ENCODE measurements at regions of chr1 and their contacts with region 1.

Region 1: GRCh38 chr1:228500901-228501871 is 14.0 kb downstream of the RNF187 start:
- DNase-seq: peak; percentile 80
- H3K4me3 Mint-ChIP-seq: peak overlapping the region; percentile 40
- H3K27ac Mint-ChIP-seq: peak overlapping the region; percentile 29
- H3K4me1 Mint-ChIP-seq: peaks cover 36% of the 10 kb centered on the region
- H3K27me3 Mint-ChIP-seq: no peaks in the 10 kb centered on the region

Region 2: DNA sequence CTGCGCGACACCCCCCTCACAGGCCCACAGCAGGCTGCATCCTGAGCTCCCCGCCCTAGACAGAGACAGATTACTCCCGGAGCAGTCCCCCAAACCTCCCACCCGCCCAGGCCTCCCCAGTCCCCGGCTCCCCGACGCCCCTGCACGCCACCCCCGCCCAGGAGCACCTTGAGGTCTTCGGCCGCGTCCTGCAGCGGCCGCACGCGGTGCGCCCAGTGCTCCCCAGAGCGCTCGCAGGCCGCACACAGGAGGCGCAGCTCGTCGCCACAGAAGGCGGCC is 95.3 kb before region 1 on chr1:
- intact Hi-C with region 1: loop called (anchors 5 kb)
- DNase-seq: no peak
- H3K4me3 Mint-ChIP-seq: peak overlapping the region; percentile 97
- H3K27ac Mint-ChIP-seq: peak overlapping the region; percentile 92
- H3K4me1 Mint-ChIP-seq: peaks cover 41% of the 10 kb centered on the region
- H3K27me3 Mint-ChIP-seq: no peaks in the 10 kb centered on the region

Region 3: GRCh38 chr1:228464487-228464983 is 36.7 kb before region 1 on chr1:
- intact Hi-C with region 1: loop called (anchors 1 kb)
- DNase-seq: peak; percentile 93
- H3K4me3 Mint-ChIP-seq: peak overlapping the region; percentile 82
- H3K27ac Mint-ChIP-seq: peak overlapping the region; percentile 87
- H3K4me1 Mint-ChIP-seq: peaks cover 58% of the 10 kb centered on the region
- H3K27me3 Mint-ChIP-seq: peaks cover 3% of the 10 kb centered on the region

Region 4: DNA sequence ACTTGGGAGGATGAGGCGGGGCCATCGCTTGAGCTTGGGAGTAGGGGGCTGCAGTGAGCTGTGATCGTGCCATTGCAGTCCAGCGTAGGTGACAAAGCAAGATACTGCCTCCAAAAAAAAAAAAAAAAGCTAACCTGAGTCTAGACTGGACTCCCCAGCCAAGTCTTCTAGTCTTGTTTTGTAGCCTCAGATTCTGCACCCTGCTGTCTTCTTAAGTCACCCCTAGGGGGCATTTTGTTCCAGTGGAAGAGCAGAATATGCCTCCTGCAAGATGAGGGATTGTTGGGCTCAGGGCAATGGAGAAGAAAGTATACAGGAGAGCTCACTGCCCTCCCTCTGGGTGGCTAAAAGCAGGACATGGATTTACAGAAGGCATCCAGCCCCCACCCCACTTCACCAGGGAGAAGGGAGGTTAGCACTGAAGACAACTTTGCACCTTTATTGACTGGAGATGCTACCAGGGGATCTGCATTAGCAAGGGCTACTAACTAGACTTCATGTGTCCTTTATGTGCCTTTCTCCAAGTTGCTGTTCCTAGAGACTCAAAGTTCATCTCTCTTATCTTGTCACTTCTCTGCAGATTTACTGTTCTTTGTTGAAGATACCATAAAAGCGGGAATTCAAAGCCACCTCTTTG is 29.3 kb before region 1 on chr1:
- intact Hi-C with region 1: loop called (anchors 1 kb)
- DNase-seq: no peak
- H3K4me3 Mint-ChIP-seq: no peak overlapping the region
- H3K27ac Mint-ChIP-seq: peak overlapping the region; percentile 70
- H3K4me1 Mint-ChIP-seq: peaks cover 30% of the 10 kb centered on the region
- H3K27me3 Mint-ChIP-seq: peaks cover 3% of the 10 kb centered on the region

Region 5: GRCh38 chr1:228486596-228487335 is 14.4 kb before region 1 on chr1:
- intact Hi-C with region 1: loop called (anchors 1 kb)
- DNase-seq: peak; percentile 83
- H3K4me3 Mint-ChIP-seq: peak overlapping the region; percentile 97
- H3K27ac Mint-ChIP-seq: peak overlapping the region; percentile 100
- H3K4me1 Mint-ChIP-seq: peaks cover 35% of the 10 kb centered on the region
- H3K27me3 Mint-ChIP-seq: no peaks in the 10 kb centered on the region

Region 6: GRCh38 chr1:228515200-228515834 is 14.1 kb after region 1 on chr1:
- intact Hi-C with region 1: loop called (anchors 1 kb)
- DNase-seq: no peak
- H3K4me3 Mint-ChIP-seq: no peak overlapping the region
- H3K27ac Mint-ChIP-seq: no peak overlapping the region
- H3K4me1 Mint-ChIP-seq: peaks cover 12% of the 10 kb centered on the region
- H3K27me3 Mint-ChIP-seq: peaks cover 46% of the 10 kb centered on the region